ENCODE measurements at regions of chr6 and their contacts with region 1.

Region 1: GRCh38 chr6:166969390-166970002 is 13.1 kb upstream of the RNASET2 start:
- DNase-seq: no peak
- H3K4me3 Mint-ChIP-seq: no peak overlapping the region
- H3K27ac Mint-ChIP-seq: peak overlapping the region; percentile 70
- H3K4me1 Mint-ChIP-seq: peaks cover 26% of the 10 kb centered on the region
- H3K27me3 Mint-ChIP-seq: no peaks in the 10 kb centered on the region

Region 2: GRCh38 chr6:166956444-166957086 is 12.9 kb before region 1 on chr6 and contains the start of gene RNASET2:
- CTCF ChIA-PET with region 1: interaction called, 4 read pairs
- POLR2A ChIA-PET with region 1: interaction called, 40 read pairs
- DNase-seq: peak; percentile 99
- H3K4me3 Mint-ChIP-seq: peak within 1 kb of the TSS; percentile 91
- H3K27ac Mint-ChIP-seq: peak within 1 kb of the TSS; percentile 99
- H3K4me1 Mint-ChIP-seq: peaks cover 73% of the 10 kb centered on the region
- H3K27me3 Mint-ChIP-seq: no peaks in the 10 kb centered on the region
- total RNA-seq, gene RNASET2: 107 to 112 TPM

Region 3: DNA sequence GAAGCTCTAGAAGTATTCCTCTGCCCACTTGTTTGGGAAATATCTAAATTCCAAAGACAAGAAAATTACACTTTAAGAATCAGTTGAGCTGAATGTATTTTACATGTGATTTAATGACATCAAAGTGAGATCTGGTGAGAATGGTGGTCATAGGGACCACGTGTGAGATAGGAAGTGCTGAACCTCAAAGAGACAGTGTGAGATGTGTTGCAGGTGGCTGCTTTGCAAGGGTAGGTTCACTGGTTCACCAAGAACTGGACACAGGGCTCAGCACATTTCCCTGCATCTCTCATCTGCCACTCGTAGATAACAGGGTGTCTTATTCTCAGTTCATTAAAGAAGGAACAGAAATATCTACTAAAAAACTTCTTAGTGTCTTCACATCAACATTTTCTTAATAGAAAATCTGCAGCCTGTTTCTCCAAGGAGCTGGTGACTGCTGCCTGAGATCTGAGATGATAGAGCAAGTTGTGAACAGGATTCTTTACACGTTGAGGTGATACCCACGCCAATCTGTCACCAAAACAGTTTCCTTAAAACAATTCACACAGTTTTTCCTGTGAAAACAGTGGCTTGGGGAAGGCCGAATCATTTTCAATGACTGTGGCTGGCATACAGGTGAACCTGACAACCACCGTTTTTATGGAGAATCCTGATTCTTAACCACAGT is 160.6 kb after region 1 on chr6:
- CTCF ChIA-PET with region 1: no interaction called
- POLR2A ChIA-PET with region 1: no interaction called
- DNase-seq: no peak
- H3K4me3 Mint-ChIP-seq: no peak overlapping the region
- H3K27ac Mint-ChIP-seq: peak overlapping the region; percentile 27
- H3K4me1 Mint-ChIP-seq: peaks cover 48% of the 10 kb centered on the region
- H3K27me3 Mint-ChIP-seq: no peaks in the 10 kb centered on the region

Measured in activated CD4-positive, alpha-beta memory T cell treated with anti-CD3 and anti-CD28 coated beads, Interleukin-2, amount 10 ng/mL, durations not matched to agents 7 days and 5 days (primary cell).